ENCODE measurements at regions of chr13 and their contacts with region 1.

Region 1: GRCh38 chr13:105804561-105805190 is 730.8 kb downstream of the EFNB2 start:
- DNase-seq: no peak
- H3K4me3 ChIP-seq: no peak overlapping the region
- H3K4me3 Mint-ChIP-seq: no peak overlapping the region
- H3K27ac ChIP-seq: no peak overlapping the region
- H3K27ac Mint-ChIP-seq: no peak overlapping the region
- H3K4me1 ChIP-seq: no peaks in the 10 kb centered on the region
- H3K4me1 Mint-ChIP-seq: no peaks in the 10 kb centered on the region
- H3K27me3 ChIP-seq: no peaks in the 10 kb centered on the region
- H3K27me3 Mint-ChIP-seq: peaks cover 0 to 3% (median 0%) of the 10 kb centered on the region in 3 donors
- CTCF ChIP-seq: no peak

Region 2: GRCh38 chr13:105827111-105827809 is 22.6 kb after region 1 on chr13:
- intact Hi-C with region 1: loop called in 1 of 2 experiments (anchors 2 kb)
- DNase-seq: no peak
- H3K4me3 ChIP-seq: no peak overlapping the region
- H3K4me3 Mint-ChIP-seq: no peak overlapping the region
- H3K27ac ChIP-seq: no peak overlapping the region
- H3K27ac Mint-ChIP-seq: no peak overlapping the region
- H3K4me1 ChIP-seq: no peaks in the 10 kb centered on the region
- H3K4me1 Mint-ChIP-seq: no peaks in the 10 kb centered on the region
- H3K27me3 ChIP-seq: no peaks in the 10 kb centered on the region
- H3K27me3 Mint-ChIP-seq: no peaks in the 10 kb centered on the region
- CTCF ChIP-seq: no peak